Gastrocnemius medialis (tissue), 4 donors: ENCODE measurements at regions of chr12 and their contacts with region 1.

Region 1: DNA sequence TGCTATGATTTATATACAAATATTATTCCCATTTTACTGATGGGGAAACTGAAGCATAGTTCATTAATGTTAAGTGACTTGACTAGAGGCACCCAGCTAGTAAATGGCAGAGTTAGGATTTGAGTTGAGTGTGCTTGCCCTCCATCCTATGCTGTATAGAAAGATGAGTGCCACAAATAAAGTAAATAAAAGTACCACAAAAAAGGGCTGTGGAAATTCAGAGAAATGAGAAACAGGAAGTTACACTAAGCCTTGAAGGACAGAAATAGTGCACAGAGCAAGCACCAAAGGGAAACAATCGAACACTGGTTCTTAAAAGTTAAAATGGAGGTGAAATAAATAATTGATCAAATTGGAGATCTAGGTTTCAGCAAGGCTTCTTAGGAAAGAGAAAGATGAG is 9.2 kb upstream of the ABCD2 start:
- DNase-seq: no peak
- ATAC-seq: no peak
- H3K4me3 ChIP-seq: no peak overlapping the region
- H3K27ac ChIP-seq: no peak overlapping the region
- H3K4me1 ChIP-seq: no peaks in the 10 kb centered on the region
- H3K27me3 ChIP-seq: no peaks in the 10 kb centered on the region
- CTCF ChIP-seq: no peak
- POLR2A ChIP-seq: no peak

Region 2: GRCh38 chr12:39020269-39020668 is 608.6 kb before region 1 on chr12:
- in situ Hi-C with region 1: no loop called
- intact Hi-C with region 1: no loop called
- DNase-seq: no peak
- ATAC-seq: no peak
- H3K4me3 ChIP-seq: no peak overlapping the region
- H3K27ac ChIP-seq: no peak overlapping the region
- H3K4me1 ChIP-seq: no peaks in the 10 kb centered on the region
- H3K27me3 ChIP-seq: no peaks in the 10 kb centered on the region
- CTCF ChIP-seq: no peak
- POLR2A ChIP-seq: no peak

Region 3: GRCh38 chr12:39692258-39692853 is 63.5 kb after region 1 on chr12:
- in situ Hi-C with region 1: no loop called
- intact Hi-C with region 1: no loop called
- DNase-seq: no peak
- ATAC-seq: no peak
- H3K4me3 ChIP-seq: no peak overlapping the region
- H3K27ac ChIP-seq: no peak overlapping the region
- H3K4me1 ChIP-seq: no peaks in the 10 kb centered on the region
- H3K27me3 ChIP-seq: no peaks in the 10 kb centered on the region
- CTCF ChIP-seq: peak in 2 of 5 experiments; percentile 17 to 35
- POLR2A ChIP-seq: no peak

Region 4: DNA sequence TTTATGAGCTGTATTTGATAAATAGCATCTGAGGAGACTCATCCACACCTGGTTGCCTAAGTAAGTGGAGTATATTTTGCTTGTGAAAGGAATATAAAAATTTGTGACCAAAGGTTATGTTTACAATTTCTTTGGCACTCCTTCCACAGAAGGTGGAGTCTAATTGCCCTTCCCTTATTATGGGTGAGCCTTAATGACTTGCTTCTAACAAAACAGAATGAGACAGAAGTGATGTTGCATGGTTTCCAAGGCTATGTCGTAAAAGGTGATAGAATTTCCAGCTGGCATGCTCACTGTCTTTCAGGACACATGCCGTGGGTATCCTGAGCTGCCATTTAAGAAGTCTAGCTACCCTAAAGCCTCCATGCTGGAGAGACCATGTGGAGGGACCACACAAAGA is 107.6 kb after region 1 on chr12:
- in situ Hi-C with region 1: loop called in 1 of 4 experiments (anchors 25 kb)
- intact Hi-C with region 1: no loop called
- DNase-seq: no peak
- ATAC-seq: no peak
- H3K4me3 ChIP-seq: no peak overlapping the region
- H3K27ac ChIP-seq: no peak overlapping the region
- H3K4me1 ChIP-seq: no peaks in the 10 kb centered on the region
- H3K27me3 ChIP-seq: no peaks in the 10 kb centered on the region
- CTCF ChIP-seq: no peak
- POLR2A ChIP-seq: no peak